ENCODE measurements at regions of chr9 and their contacts with region 1.

Region 1: GRCh38 chr9:128438343-128439109 is 17.3 kb upstream of the ODF2 start:
- DNase-seq: peak; percentile 78
- H3K4me3 ChIP-seq: no peak overlapping the region
- H3K27ac ChIP-seq: no peak overlapping the region
- H3K4me1 ChIP-seq: peaks cover 2% of the 10 kb centered on the region
- H3K27me3 ChIP-seq: no peaks in the 10 kb centered on the region
- CTCF ChIP-seq: peak; percentile 92 to 98
- POLR2A ChIP-seq: peak; percentile 63

Region 2: GRCh38 chr9:128361986-128362646 is 76.4 kb before region 1 on chr9:
- CTCF ChIA-PET with region 1: interaction called, 12 read pairs
- POLR2A ChIA-PET with region 1: no interaction called
- dilution Hi-C with region 1: no loop called
- intact Hi-C with region 1: no loop called
- DNase-seq: peak; percentile 87
- H3K4me3 ChIP-seq: peak overlapping the region in 2 of 3 experiments; percentile 37 to 48
- H3K27ac ChIP-seq: no peak overlapping the region
- H3K4me1 ChIP-seq: peaks cover 17% of the 10 kb centered on the region
- H3K27me3 ChIP-seq: no peaks in the 10 kb centered on the region
- CTCF ChIP-seq: peak; percentile 79 to 92
- POLR2A ChIP-seq: peak; percentile 66

Region 3: GRCh38 chr9:128448746-128449145 is 10.2 kb after region 1 on chr9:
- CTCF ChIA-PET with region 1: interaction called, 57 read pairs
- POLR2A ChIA-PET with region 1: no interaction called
- dilution Hi-C with region 1: no loop called
- intact Hi-C with region 1: no loop called
- DNase-seq: no peak
- H3K4me3 ChIP-seq: no peak overlapping the region
- H3K27ac ChIP-seq: no peak overlapping the region
- H3K4me1 ChIP-seq: no peaks in the 10 kb centered on the region
- H3K27me3 ChIP-seq: no peaks in the 10 kb centered on the region
- CTCF ChIP-seq: no peak
- POLR2A ChIP-seq: no peak

Region 4: DNA sequence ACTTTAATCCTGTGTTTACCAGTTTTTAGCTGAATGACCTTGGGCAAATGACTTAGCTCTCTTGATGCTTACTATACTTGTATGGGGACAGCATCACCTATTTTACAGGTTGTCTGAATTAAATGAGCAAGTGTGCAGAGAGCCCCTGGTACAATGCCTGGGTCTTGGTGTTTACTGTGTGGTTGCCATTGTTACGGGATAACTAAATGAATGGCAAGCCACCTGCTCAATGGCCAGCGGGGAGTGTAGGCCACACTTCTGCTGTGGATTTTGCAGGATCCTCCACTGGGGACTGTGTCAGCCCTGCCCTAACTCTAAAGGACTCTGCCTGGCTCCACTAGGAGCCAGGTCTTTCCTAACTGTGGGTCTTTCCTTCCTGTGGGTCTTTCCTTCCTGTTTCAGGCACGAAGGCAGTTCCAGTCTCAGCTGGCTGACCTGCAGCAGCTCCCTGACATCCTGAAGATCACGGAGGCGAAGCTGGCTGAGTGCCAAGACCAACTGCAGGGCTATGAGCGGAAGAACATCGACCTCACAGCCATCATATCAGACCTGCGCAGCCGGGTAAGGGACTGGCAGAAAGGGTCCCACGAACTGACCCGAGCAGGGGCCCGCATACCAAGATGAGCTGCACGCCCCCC is 55.7 kb after region 1 on chr9:
- CTCF ChIA-PET with region 1: interaction called, 19 read pairs
- POLR2A ChIA-PET with region 1: no interaction called
- dilution Hi-C with region 1: no loop called
- intact Hi-C with region 1: loop called (anchors 1 kb)
- DNase-seq: peak; percentile 92
- H3K4me3 ChIP-seq: no peak overlapping the region
- H3K27ac ChIP-seq: peak overlapping the region; percentile 64
- H3K4me1 ChIP-seq: peaks cover 26% of the 10 kb centered on the region
- H3K27me3 ChIP-seq: no peaks in the 10 kb centered on the region
- CTCF ChIP-seq: no peak
- POLR2A ChIP-seq: peak; percentile 33

Region 5: GRCh38 chr9:128565578-128565977 is 127.1 kb after region 1 on chr9:
- CTCF ChIA-PET with region 1: interaction called, 13 read pairs
- POLR2A ChIA-PET with region 1: no interaction called
- dilution Hi-C with region 1: no loop called
- intact Hi-C with region 1: loop called (anchors 2 kb)
- DNase-seq: peak; percentile 83
- H3K4me3 ChIP-seq: peak overlapping the region in 1 of 3 experiments; percentile 41
- H3K27ac ChIP-seq: peak overlapping the region; percentile 44
- H3K4me1 ChIP-seq: peaks cover 22% of the 10 kb centered on the region
- H3K27me3 ChIP-seq: no peaks in the 10 kb centered on the region
- CTCF ChIP-seq: no peak
- POLR2A ChIP-seq: peak; percentile 30